ENCODE measurements at regions of chr10 and their contacts with region 1.

Region 1: DNA sequence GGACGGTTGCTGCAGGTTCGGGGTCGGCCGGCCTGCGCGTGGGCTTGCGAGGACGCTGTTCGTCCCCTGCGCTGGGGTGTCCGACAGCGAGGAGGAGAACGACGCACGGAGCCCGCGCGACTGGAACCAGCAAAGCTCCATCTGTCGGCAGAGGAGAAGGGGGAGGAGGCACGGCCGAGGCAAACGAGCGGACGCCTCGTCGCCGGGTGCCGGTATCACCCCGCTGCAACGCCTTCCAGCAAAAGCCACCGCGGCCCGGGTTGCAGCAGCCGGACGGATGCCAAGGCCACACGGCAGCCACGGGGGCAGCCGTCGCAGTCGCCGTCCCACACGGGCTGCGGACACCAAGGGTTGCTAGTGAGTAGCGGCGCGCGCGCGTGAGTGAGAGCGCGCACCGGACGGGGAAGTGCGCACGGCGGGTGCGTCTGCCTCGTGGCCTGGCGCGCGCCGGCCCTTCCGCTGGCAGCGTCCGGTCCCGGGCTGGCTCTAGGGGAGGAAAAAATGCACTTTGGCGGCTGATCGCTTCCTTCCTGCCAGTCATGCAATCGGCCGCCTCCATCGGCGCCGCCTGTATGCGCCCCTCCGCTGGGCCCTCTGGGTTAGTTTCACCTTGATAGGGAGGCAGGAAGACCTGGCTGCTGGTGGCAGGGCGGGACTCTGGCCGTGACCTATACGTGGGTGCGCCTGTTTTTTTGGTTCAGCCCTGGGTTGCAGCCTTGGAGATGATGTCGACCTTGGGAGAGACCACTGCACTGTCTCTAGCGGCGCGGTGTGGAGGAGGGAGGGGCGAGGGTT is 434 bp downstream of the STAMBPL1 start:
- DNase-seq: peak; percentile 82 to 92 (median 87)
- ATAC-seq: peak; percentile 91 to 99 (median 97)
- H3K4me3 ChIP-seq: peak overlapping the region; percentile 53 to 86 (median 72)
- H3K27ac ChIP-seq: peak overlapping the region; percentile 78 to 98 (median 90)
- H3K4me1 ChIP-seq: peaks cover 0 to 51% (median 9%) of the 10 kb centered on the region in 12 donors
- H3K27me3 ChIP-seq: no peaks in the 10 kb centered on the region
- CTCF ChIP-seq: peak in 7 of 12 donors; percentile 7 to 56 (median 42)
- POLR2A ChIP-seq: peak in 1 of 2 donors; percentile 35

Region 2: DNA sequence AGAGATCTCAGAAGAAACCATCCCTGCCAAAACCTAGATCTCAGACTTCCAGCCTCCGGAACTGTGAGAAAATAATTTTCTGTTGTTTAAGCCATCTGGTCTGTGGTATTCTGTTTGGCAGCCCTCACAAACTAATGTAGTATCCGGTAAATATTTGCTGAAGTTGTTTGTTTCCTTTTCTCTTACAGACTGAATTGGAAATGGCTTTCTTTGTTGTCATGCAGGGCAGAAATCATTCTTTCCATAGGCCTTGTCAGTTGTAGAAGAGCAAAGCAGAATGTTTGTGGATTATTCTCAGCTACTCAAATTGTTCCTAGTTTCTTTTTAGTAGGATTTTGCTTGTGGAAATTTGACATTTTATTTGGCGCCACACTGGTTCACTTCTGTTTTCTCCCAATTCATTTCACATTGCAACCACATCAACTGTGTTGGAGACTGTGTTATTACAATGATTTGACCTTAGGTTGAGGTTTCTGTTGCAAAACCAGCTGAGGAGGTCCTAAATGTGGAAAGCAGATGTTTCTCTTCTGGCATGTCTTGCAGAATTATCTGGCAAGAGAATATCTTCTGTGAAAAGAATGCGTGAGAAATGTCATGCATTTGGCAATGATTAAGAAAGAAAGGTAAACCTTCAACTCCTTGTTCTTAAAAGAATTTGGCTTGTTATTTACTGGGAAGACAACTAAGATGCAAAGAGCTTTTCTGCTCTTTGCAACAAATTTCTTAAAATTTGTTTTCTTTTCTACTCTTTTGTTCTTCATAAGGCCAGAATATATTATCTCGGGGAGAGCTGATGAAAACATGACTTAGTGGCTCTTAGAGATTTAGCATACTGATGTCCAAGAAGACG is 46.3 kb after region 1 on chr10:
- intact Hi-C with region 1: loop called in 8 of 10 experiments (anchors 2 to 5 kb)
- DNase-seq: no peak
- ATAC-seq: peak; percentile 48 to 84 (median 78)
- H3K4me3 ChIP-seq: peak overlapping the region in 6 of 12 donors; percentile 7 to 23 (median 8)
- H3K27ac ChIP-seq: peak overlapping the region in 11 of 12 donors; percentile 45 to 83 (median 73)
- H3K4me1 ChIP-seq: peaks cover 0 to 45% (median 17%) of the 10 kb centered on the region in 12 donors
- H3K27me3 ChIP-seq: no peaks in the 10 kb centered on the region
- CTCF ChIP-seq: no peak
- POLR2A ChIP-seq: no peak

Region 3: DNA sequence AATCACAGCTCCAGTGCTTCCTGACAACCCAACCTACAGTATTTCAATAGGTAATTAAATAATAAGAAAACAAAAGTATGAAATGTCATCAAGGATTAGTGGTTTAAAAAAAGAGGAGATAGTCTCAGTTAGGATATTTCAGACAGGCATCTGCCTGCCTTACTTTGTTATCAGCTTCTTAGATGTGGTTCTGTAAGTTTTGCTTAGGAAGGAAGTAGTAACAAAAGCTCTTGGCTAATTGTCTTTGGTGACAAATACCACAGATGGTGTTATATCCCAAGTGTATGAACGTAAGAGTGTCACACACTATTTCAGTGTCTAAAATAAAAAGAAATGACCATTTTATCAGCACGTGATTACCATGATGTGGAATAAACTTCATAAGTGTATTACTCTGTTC is 81.9 kb after region 1 on chr10:
- intact Hi-C with region 1: no loop called
- DNase-seq: no peak
- ATAC-seq: no peak
- H3K4me3 ChIP-seq: no peak overlapping the region
- H3K27ac ChIP-seq: no peak overlapping the region
- H3K4me1 ChIP-seq: peaks cover 0 to 25% (median 7%) of the 10 kb centered on the region in 12 donors
- H3K27me3 ChIP-seq: no peaks in the 10 kb centered on the region
- CTCF ChIP-seq: no peak
- POLR2A ChIP-seq: no peak

Region 4: GRCh38 chr10:88974446-88975376 is 94.2 kb after region 1 on chr10:
- intact Hi-C with region 1: no loop called
- DNase-seq: no peak
- ATAC-seq: peak in 2 of 4 donors; percentile 28 to 61
- H3K4me3 ChIP-seq: peak overlapping the region in 11 of 12 donors; percentile 11 to 64 (median 50)
- H3K27ac ChIP-seq: peak overlapping the region in 11 of 12 donors; percentile 26 to 85 (median 72)
- H3K4me1 ChIP-seq: peaks cover 0 to 52% (median 16%) of the 10 kb centered on the region in 12 donors
- H3K27me3 ChIP-seq: no peaks in the 10 kb centered on the region
- CTCF ChIP-seq: no peak
- POLR2A ChIP-seq: no peak

Region 5: GRCh38 chr10:88986549-88987242 is 106.2 kb after region 1 on chr10:
- intact Hi-C with region 1: loop called in 1 of 10 experiments (anchors 2 kb)
- DNase-seq: no peak
- ATAC-seq: no peak
- H3K4me3 ChIP-seq: no peak overlapping the region
- H3K27ac ChIP-seq: peak overlapping the region in 2 of 12 donors; percentile 43 to 95
- H3K4me1 ChIP-seq: peaks cover 0 to 67% (median 20%) of the 10 kb centered on the region in 12 donors
- H3K27me3 ChIP-seq: no peaks in the 10 kb centered on the region
- CTCF ChIP-seq: peak; percentile 74 to 93 (median 84)
- POLR2A ChIP-seq: no peak

Region 6: GRCh38 chr10:89241486-89242344 is 361.2 kb after region 1 on chr10:
- intact Hi-C with region 1: no loop called
- DNase-seq: no peak
- ATAC-seq: peak in 3 of 4 donors; percentile 49 to 62 (median 51)
- H3K4me3 ChIP-seq: no peak overlapping the region
- H3K27ac ChIP-seq: peak overlapping the region in 4 of 12 donors; percentile 2 to 74 (median 24)
- H3K4me1 ChIP-seq: peaks cover 0 to 70% (median 7%) of the 10 kb centered on the region in 12 donors
- H3K27me3 ChIP-seq: no peaks in the 10 kb centered on the region
- CTCF ChIP-seq: no peak
- POLR2A ChIP-seq: no peak